OCI-LY7 (cell line): ENCODE measurements at regions of chr1 and their contacts with region 1.

Region 1: GRCh38 chr1:109397538-109398342 is at the start of gene SORT1:
- DNase-seq: peak; percentile 94
- H3K4me3 ChIP-seq: peak within 1 kb of the TSS; percentile 84
- H3K27ac ChIP-seq: peak within 1 kb of the TSS; percentile 39
- H3K4me1 ChIP-seq: peaks cover 52% of the 10 kb centered on the region
- CTCF ChIP-seq: peak; percentile 60
- total RNA-seq, gene SORT1: 16.2 and 21.8 TPM in 2 replicates

Region 2: GRCh38 chr1:109201123-109201703 is 196.5 kb before region 1 on chr1:
- CTCF ChIA-PET with region 1: no interaction called
- POLR2A ChIA-PET with region 1: no interaction called
- intact Hi-C with region 1: loop called (anchors 5 kb)
- DNase-seq: peak; percentile 70
- H3K4me3 ChIP-seq: no peak overlapping the region
- H3K27ac ChIP-seq: no peak overlapping the region
- H3K4me1 ChIP-seq: no peaks in the 10 kb centered on the region
- CTCF ChIP-seq: peak; percentile 90

Region 3: DNA sequence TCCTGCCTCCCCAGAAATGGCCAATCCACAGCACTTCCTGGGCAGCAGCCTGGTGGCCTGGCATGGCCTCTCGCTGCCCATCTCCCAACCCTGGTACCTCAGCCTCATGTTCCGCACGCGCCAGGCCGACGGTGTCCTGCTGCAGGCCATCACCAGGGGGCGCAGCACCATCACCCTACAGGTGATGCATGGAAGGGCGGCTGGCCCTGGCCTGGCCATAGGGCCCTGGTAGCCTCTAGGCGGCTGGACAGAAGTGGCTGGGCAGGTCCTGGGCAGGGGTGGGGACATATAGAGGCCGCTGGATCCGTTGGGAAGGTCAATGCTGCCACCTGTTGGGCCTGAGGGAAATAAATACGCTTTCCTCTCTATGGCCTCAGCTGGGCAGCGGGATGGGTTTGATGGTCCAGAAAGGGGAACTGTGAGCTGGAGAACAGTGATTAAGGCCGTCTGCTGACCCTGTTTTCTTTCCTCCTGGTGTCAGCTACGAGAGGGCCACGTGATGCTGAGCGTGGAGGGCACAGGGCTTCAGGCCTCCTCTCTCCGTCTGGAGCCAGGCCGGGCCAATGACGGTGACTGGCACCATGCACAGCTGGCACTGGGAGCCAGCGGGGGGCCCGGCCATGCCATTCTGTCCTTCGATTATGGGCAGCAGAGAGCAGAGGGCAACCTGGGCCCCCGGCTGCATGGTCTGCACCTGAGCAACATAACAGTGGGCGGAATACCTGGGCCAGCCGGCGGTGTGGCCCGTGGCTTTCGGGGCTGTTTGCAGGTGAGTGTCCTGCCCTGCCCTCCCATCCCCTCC is 133.9 kb before region 1 on chr1:
- CTCF ChIA-PET with region 1: interaction called, 4 read pairs
- POLR2A ChIA-PET with region 1: no interaction called
- intact Hi-C with region 1: loop called (anchors 1 kb)
- DNase-seq: peak; percentile 76
- H3K4me3 ChIP-seq: no peak overlapping the region
- H3K27ac ChIP-seq: no peak overlapping the region
- H3K4me1 ChIP-seq: no peaks in the 10 kb centered on the region
- CTCF ChIP-seq: peak; percentile 93

Region 4: DNA sequence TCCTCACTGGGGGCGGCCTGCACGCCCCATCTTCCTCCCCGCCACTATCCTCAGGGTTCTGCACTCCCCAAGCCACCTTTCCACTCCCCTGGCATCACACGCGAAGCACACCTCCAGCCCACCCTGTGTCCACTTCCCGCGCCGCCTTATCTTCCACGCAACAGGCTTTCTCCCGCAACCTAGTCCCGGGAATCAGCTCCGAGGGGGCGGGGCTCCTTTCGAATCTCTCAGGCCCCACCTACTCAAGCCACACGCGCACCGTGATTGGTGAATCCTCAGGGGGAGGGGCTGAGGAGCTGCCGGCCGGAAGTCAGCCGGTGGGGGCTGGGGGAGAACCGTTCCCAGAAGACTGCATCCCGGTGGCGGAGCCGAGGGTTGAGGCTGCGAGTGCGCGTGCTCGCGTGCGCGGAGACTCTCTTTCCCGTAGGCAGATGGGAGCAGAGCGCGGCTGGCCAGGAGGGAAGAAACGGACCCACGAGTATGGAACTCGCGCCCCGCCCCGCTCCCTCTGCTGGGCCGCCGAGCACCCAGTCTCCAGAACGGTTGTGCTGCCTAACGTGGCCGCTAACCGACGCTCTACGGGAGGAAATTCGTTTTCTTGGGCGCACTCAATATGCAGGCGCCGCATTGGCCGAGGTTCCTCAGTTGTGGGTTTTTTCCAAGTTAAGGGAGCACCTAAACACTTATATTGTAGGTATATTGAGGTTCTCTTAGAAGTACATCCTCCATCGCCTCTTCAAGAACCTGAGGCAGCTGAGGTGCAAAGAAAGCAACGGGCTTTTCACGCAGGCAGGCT is 114.6 kb before region 1 on chr1 and contains the start of gene PSRC1:
- CTCF ChIA-PET with region 1: interaction called, 5 read pairs
- POLR2A ChIA-PET with region 1: interaction called, 55 read pairs
- intact Hi-C with region 1: loop called (anchors 1 kb)
- DNase-seq: peak; percentile 94
- H3K4me3 ChIP-seq: peak within 1 kb of the TSS; percentile 77
- H3K27ac ChIP-seq: peak within 1 kb of the TSS; percentile 60
- H3K4me1 ChIP-seq: peaks cover 17% of the 10 kb centered on the region
- CTCF ChIP-seq: peak; percentile 70
- total RNA-seq, gene PSRC1: 42.7 and 44.5 TPM in 2 replicates

Region 5: DNA sequence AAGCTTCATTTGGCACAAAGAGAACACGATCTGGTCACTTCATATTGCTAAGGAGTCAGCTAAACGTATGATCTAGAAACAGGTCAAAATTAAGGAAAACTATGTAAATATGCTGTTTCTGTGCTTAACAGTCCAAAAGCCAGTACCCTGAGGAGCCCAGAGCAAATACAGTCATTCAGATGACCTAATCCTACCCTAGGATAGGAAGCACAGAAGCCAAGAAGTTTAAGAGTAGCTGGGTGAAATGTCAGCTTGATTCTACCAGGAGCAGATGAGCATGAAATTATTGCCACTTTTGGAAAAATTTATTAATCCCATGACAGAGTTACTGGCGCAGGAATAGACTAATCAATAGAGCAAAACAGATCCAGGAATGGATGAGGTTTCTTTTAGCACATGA is 18.3 kb before region 1 on chr1:
- CTCF ChIA-PET with region 1: no interaction called
- POLR2A ChIA-PET with region 1: interaction called, 21 read pairs
- intact Hi-C with region 1: no loop called
- DNase-seq: no peak
- H3K4me3 ChIP-seq: no peak overlapping the region
- H3K27ac ChIP-seq: no peak overlapping the region
- H3K4me1 ChIP-seq: peaks cover 45% of the 10 kb centered on the region
- CTCF ChIP-seq: no peak

Region 6: GRCh38 chr1:109532365-109533136 is 134.8 kb after region 1 on chr1:
- CTCF ChIA-PET with region 1: interaction called, 3 read pairs
- POLR2A ChIA-PET with region 1: interaction called, 5 read pairs
- intact Hi-C with region 1: loop called (anchors 2 kb)
- DNase-seq: peak; percentile 85
- H3K4me3 ChIP-seq: peak overlapping the region; percentile 58
- H3K27ac ChIP-seq: peak overlapping the region; percentile 32
- H3K4me1 ChIP-seq: peaks cover 6% of the 10 kb centered on the region
- CTCF ChIP-seq: peak; percentile 79